Activated CD4-positive, alpha-beta T cell treated with anti-CD3 and anti-CD28 coated beads, Interleukin-2, amount 10 ng/mL, durations not matched to agents 24 days and 14 days (primary cell): ENCODE measurements at regions of chr7 and their contacts with region 1.

Region 1: GRCh38 chr7:141737834-141738591 is at the start of gene SSBP1:
- DNase-seq: peak; percentile 98
- H3K4me3 Mint-ChIP-seq: peak within 1 kb of the TSS; percentile 99
- H3K27ac Mint-ChIP-seq: peak within 1 kb of the TSS; percentile 99
- H3K4me1 Mint-ChIP-seq: peaks cover 29% of the 10 kb centered on the region
- H3K27me3 Mint-ChIP-seq: peaks cover 5% of the 10 kb centered on the region
- total RNA-seq, gene SSBP1: 264 and 266 TPM in 2 replicates

Region 2: GRCh38 chr7:141072548-141073172 is 665.4 kb before region 1 on chr7:
- intact Hi-C with region 1: loop called (anchors 10 kb)
- DNase-seq: peak; percentile 82
- H3K4me3 Mint-ChIP-seq: peak overlapping the region; percentile 83
- H3K27ac Mint-ChIP-seq: no peak overlapping the region
- H3K4me1 Mint-ChIP-seq: peaks cover 19% of the 10 kb centered on the region
- H3K27me3 Mint-ChIP-seq: peaks cover 43% of the 10 kb centered on the region

Region 3: DNA sequence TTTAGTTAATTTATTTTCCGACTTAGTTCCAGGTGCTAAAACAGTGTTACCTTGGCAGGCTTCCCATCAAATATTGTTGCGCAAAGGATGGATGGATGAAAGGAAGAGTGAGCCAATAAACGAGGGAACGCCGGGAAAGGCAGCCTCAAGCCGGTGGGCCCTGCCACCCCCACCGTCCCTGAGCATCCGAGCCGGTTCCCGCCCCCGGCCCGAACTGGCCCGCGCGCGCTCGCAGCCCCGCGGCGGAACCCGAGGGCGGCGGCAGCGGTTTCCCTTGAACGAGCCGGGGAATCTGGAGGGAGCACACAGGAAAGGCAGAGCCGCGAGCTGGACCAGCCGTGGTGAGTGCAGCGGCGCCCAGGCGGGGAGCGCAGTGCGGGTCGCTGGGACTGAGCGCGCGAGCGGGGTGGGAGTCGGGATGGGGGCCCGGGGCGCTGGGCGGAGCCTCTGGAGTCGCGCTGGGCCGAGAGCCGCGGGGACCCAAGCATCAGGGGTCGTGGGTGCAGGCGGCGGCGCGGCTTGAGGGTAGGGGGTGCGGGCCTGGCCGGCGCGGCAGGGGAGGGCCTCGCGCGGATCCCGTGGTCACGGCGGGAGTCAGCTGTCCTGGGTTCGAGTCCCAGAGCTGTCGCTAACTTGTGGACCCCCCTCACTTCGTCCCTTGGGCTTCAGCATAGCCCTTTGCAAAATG is 186.8 kb before region 1 on chr7 and contains the start of gene AGK:
- intact Hi-C with region 1: loop called (anchors 1 kb)
- DNase-seq: peak; percentile 95
- H3K4me3 Mint-ChIP-seq: peak within 1 kb of the TSS; percentile 89
- H3K27ac Mint-ChIP-seq: peak within 1 kb of the TSS; percentile 93
- H3K4me1 Mint-ChIP-seq: peaks cover 43% of the 10 kb centered on the region
- H3K27me3 Mint-ChIP-seq: no peaks in the 10 kb centered on the region
- total RNA-seq, gene AGK: 146 and 151 TPM in 2 replicates

Region 4: DNA sequence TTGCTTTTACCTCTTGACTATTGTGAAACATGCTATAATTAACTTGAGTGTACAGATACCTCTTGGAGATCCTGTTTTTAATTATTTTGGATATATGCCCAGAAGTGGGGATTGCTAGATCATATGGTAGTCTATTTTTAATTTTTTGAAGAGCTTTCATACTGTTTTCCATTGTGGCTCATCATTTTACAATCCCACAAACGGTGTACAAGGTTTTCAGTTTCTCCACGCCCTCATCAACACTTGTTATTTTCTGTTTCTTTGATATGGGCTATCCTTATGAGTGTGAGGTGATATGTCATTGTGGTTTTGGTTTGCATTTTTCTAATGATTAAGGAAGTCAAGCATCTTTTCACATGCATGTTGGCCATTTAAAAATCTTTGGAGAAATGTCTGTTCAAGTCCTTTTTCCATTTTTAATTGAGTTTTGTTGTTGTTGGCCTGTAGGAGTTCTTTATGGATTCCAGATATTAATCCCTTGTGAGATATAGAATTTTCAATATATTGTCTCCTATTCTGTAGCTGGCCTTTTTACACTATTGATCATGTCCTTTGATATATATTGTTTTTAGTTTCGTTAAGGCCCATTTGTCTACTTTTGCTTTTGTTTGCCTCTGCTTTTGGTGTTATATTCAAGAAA is 179.3 kb before region 1 on chr7:
- intact Hi-C with region 1: loop called (anchors 1 kb)
- DNase-seq: peak; percentile 79
- H3K4me3 Mint-ChIP-seq: peak overlapping the region; percentile 59
- H3K27ac Mint-ChIP-seq: peak overlapping the region; percentile 86
- H3K4me1 Mint-ChIP-seq: peaks cover 63% of the 10 kb centered on the region
- H3K27me3 Mint-ChIP-seq: no peaks in the 10 kb centered on the region

Region 5: DNA sequence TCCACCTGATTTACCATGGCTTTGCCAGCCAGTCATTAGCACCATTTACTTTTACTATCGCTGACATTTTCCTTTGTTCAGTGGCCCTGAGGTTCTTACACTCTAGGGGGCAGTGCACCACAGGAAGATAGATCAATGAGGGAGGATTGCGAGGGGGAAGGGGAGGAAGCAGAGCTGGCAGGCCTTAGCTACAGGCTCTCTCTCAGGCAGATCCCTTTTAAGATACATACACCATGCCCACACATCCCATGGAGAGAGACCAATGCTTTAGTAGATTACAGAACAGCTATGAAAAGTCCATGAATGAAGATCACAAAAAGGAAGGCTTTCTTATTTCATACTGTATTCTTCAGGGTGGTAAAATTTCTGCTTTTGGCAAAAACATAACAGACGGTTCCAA is 83.5 kb before region 1 on chr7:
- intact Hi-C with region 1: loop called (anchors 1 kb)
- DNase-seq: peak; percentile 90
- H3K4me3 Mint-ChIP-seq: no peak overlapping the region
- H3K27ac Mint-ChIP-seq: peak overlapping the region; percentile 73
- H3K4me1 Mint-ChIP-seq: peaks cover 4% of the 10 kb centered on the region
- H3K27me3 Mint-ChIP-seq: no peaks in the 10 kb centered on the region

Region 6: DNA sequence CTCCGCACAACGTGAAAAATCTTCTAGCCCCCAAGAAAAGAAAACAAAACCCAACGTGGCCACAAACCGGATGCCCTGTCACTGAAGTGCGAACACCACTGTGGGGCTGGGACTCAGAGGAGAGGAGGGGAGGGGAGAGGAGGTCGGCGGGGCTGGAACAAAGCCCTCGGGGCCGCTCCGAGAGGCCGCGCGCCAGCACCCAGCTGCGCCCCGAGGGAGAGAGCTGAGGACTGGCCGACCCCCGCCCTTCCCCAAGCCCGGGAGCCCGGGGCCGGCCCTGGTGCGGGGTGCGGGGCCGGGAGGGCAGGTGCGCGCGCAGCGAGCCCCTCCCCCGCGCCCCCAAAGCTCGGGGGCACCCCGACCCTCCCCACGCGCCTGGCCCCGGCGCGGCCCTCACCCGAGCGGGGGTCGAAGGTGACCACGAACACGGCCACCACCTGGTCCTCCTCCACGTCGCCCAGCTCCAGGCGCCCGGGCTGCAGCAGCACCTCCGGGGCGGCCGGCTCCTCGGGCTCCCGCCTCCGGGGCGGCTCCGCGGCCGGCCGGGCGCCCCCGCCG is 36.4 kb before region 1 on chr7:
- intact Hi-C with region 1: loop called (anchors 1 kb)
- DNase-seq: peak; percentile 92
- H3K4me3 Mint-ChIP-seq: peak overlapping the region; percentile 83
- H3K27ac Mint-ChIP-seq: peak overlapping the region; percentile 77
- H3K4me1 Mint-ChIP-seq: peaks cover 42% of the 10 kb centered on the region
- H3K27me3 Mint-ChIP-seq: peaks cover 13% of the 10 kb centered on the region